Mammary epithelial cell (primary cell): ENCODE measurements at regions of chr1 and their contacts with region 1.

Region 1: DNA sequence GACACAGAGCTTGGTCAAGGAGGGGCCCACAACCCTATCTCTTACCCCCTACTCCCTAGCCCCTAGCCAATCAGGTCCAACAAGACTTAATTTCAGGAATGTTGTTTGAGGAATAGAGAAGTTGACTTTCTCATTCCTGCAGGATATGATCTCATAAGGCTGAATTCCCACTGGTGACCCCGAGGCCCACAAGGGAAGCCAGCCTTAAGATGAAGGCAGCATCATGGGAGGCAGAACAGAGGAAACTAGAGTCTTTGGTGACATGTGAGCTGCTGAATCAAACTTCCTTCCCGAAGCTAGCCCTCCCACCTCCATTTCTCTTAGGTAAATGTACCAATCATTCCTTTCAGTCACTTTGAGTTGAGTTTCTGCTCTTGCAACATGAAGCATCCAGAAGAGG is 9.1 kb upstream of the PDIK1L start:
- DNase-seq: no peak
- H3K4me3 ChIP-seq: no peak overlapping the region
- H3K27ac ChIP-seq: no peak overlapping the region
- H3K4me1 ChIP-seq: peaks cover 6% of the 10 kb centered on the region
- H3K27me3 ChIP-seq: peaks cover 2% of the 10 kb centered on the region
- CTCF ChIP-seq: no peak

Region 2: DNA sequence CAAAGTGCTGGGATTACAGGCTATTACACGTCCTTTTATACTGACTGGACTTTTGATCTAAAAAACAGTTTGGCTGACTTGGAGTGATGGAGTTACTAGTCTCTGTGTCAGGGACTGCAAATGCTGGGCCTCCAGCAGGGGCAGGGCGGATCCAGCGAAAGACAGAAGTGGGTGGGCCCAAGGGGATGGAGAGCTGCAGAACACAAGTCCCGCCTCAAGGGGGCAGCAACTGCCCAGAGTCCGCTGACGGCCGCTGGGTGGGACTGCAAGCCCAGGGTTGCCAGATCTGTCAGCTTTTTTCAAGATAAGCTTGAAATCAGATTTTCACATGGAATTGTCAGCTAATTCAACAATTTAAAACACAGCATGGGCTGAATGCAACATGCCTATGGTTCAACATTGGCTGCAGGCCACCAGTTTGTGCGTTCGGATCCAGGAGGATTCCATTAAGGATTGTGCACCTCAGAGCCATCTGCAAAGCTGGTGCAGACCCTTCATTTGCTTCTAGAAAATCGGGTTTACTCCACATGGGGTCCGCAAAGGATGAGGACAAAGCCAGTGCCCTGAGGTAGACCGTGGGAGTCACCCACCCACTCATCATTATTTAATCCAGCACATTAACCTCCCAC is 207.0 kb before region 1 on chr1:
- CTCF ChIA-PET with region 1: interaction called, 3 read pairs
- dilution Hi-C with region 1: no loop called
- in situ Hi-C with region 1: no loop called
- intact Hi-C with region 1: loop called (anchors 10 kb)
- DNase-seq: peak; percentile 77
- H3K4me3 ChIP-seq: no peak overlapping the region
- H3K27ac ChIP-seq: no peak overlapping the region
- H3K4me1 ChIP-seq: peaks cover 35% of the 10 kb centered on the region
- H3K27me3 ChIP-seq: no peaks in the 10 kb centered on the region
- CTCF ChIP-seq: peak; percentile 97 to 99

Region 3: DNA sequence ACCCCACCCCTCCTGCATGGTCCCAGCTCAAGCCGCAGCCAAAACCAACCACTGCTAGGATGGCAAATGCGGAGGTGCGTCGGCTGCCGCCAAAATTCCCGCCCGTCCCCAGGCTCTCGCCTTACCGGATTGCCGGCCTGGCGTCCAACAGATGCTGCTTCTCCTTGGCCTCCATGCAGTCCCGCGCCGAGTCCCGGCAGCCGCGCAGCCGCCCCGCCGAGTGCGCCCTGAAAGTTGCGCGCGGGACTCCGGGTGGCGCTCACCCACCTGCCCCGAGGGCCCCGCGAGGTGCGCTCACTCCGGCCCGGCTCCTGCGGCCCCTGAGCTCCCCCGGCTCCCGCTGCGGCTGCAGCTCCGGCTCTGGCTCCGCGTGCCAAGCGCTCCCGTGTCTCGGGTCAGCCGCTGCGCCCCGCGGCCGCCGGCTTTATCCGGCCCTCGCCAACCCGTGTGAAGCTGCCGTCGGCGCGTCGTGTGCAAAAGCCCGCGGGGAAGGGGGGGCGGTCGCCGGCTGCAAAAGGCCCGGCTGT is 56.7 kb before region 1 on chr1 and contains the start of gene SLC30A2:
- CTCF ChIA-PET with region 1: no interaction called
- dilution Hi-C with region 1: loop called (anchors 5 kb)
- in situ Hi-C with region 1: no loop called
- intact Hi-C with region 1: no loop called
- DNase-seq: peak; percentile 12
- H3K4me3 ChIP-seq: no peak within 1 kb of the TSS
- H3K27ac ChIP-seq: no peak within 1 kb of the TSS
- H3K4me1 ChIP-seq: peaks cover 9% of the 10 kb centered on the region
- H3K27me3 ChIP-seq: peaks cover 26% of the 10 kb centered on the region
- CTCF ChIP-seq: no peak
- total RNA-seq, gene SLC30A2: under 0.01 TPM in 1 of 2 donors, not detected in the other

Region 4: GRCh38 chr1:26145041-26145959 is 42.8 kb after region 1 on chr1:
- CTCF ChIA-PET with region 1: no interaction called
- dilution Hi-C with region 1: loop called (anchors 5 kb)
- in situ Hi-C with region 1: loop called (anchors 5 kb)
- intact Hi-C with region 1: loop called (anchors 1 kb)
- DNase-seq: peak; percentile 62
- H3K4me3 ChIP-seq: no peak overlapping the region
- H3K27ac ChIP-seq: no peak overlapping the region
- H3K4me1 ChIP-seq: no peaks in the 10 kb centered on the region
- H3K27me3 ChIP-seq: no peaks in the 10 kb centered on the region
- CTCF ChIP-seq: peak; percentile 59 to 77

Region 5: GRCh38 chr1:26161415-26162219 is 59.1 kb after region 1 on chr1:
- CTCF ChIA-PET with region 1: no interaction called
- dilution Hi-C with region 1: no loop called
- in situ Hi-C with region 1: no loop called
- intact Hi-C with region 1: loop called (anchors 1 kb)
- DNase-seq: peak; percentile 47
- H3K4me3 ChIP-seq: peak overlapping the region; percentile 27 to 47 (median 43)
- H3K27ac ChIP-seq: no peak overlapping the region
- H3K4me1 ChIP-seq: peaks cover 23% of the 10 kb centered on the region
- H3K27me3 ChIP-seq: no peaks in the 10 kb centered on the region
- CTCF ChIP-seq: peak in 1 of 2 donors; percentile 2

Region 6: DNA sequence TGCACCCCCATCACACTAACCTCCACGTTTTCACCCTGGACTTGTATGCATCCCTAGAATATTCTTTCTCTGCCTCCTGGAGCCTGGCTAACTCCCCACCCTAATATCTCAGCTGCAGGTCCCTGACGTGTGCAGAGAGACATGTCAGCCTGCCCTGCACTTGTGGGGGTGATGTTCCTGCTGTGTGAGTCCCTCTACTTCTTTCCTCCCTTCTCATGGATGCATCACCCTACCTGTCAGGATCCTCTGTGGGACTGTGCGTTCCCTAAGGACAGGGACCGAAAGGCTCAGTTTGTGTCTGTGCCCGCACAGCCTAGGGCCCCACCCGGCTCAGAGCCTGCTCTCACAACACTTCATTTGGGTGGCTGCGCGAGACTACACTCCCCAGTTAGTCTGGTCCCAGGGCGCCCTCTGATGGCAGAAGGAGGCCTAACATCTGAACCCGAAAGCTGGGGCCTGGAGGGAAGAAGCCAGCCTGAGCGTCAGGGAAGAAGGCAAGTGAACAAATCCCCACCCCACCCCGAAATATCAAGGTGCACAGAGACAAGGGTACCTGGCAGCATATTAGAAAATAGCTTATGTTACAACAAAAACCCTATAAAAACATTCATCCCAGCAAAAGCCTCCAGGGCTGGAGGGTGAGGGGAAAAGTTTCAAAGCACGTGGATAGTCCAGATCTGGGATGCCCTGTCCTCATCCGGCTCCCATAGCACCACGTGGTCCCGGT is 219.0 kb after region 1 on chr1:
- CTCF ChIA-PET with region 1: no interaction called
- dilution Hi-C with region 1: loop called (anchors 10 kb)
- in situ Hi-C with region 1: loop called in 1 of 2 experiments (anchors 10 kb)
- intact Hi-C with region 1: loop called (anchors 1 kb)
- DNase-seq: peak; percentile 76
- H3K4me3 ChIP-seq: no peak overlapping the region
- H3K27ac ChIP-seq: no peak overlapping the region
- H3K4me1 ChIP-seq: peaks cover 9% of the 10 kb centered on the region
- H3K27me3 ChIP-seq: no peaks in the 10 kb centered on the region
- CTCF ChIP-seq: peak; percentile 78 to 91

Region 7: DNA sequence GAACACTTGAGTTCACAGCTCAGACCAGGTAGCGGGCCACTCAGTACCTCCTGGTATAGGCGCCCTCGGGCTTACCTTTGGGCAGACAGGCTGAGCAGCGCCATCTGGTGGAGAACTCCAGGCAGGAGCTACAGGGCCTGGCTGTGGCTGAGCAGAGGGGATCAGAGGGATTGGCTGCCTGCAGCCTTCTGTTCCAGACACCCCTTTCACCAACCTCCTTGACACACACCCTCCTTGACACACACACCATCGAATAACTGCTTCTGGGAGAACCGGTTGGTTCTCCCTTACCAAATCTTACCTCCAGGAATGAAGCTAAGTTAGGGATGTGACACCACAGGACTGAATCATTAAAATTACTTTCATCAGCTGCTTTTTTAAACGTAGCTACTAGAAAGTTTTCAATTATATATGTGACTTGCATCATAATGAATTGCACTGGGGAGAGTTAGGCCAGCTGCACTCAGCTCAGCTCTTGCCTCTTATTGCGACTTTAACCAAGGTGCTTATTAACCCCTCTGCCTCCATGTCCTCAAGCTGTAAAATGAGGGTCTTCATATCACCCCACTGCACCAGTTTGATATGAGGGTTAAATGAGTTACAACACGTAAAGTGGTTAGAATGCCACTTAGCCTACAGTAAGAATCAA is 314.7 kb after region 1 on chr1:
- CTCF ChIA-PET with region 1: no interaction called
- dilution Hi-C with region 1: loop called (anchors 5 kb)
- in situ Hi-C with region 1: no loop called
- intact Hi-C with region 1: no loop called
- DNase-seq: peak; percentile 66
- H3K4me3 ChIP-seq: no peak overlapping the region
- H3K27ac ChIP-seq: no peak overlapping the region
- H3K4me1 ChIP-seq: no peaks in the 10 kb centered on the region
- H3K27me3 ChIP-seq: peaks cover 21% of the 10 kb centered on the region
- CTCF ChIP-seq: peak; percentile 86 to 96